ENCODE measurements at regions of chr4 and their contacts with region 1.

Region 1: DNA sequence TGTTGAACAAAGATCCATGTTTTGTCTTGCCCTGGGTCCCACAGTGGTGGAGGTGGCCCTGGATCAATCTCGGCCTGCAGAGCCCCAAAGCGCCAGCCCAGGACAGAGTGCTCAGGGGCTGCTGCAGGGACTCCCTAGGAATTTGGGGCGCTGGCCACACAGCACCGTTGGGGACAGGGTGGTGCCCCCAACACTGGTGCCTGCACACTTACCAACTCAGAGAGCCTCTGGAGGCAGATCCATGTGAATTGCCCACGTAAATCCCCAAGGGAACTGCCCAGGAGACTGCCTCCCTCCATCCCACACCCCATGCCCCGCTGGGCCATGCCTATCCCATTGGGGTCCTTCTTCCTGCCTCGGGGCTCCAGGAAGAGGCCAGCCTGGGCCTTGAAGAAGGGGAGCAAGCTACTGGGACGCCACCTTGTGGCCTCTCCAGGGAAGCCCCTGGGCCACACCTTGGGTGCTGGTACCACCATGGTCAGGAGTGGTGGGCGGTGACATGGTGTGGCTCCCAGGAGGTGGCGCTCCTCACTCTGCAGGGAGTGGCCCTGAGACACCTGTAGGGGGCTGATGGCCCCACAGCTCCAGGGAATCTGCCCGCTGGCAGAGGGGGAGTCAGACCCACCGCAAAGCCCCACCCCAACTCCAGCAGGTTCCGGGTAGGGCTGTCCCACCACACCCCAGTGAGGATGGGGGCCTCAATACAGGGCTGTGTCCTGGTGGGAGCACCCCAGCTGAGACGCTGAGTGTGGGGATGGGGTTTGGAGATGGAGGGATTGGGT is 22.8 kb downstream of the CFAP99 start:
- DNase-seq: peak; percentile 76
- H3K4me3 Mint-ChIP-seq: no peak overlapping the region
- H3K27ac Mint-ChIP-seq: no peak overlapping the region
- H3K4me1 Mint-ChIP-seq: peaks cover 3% of the 10 kb centered on the region
- H3K27me3 Mint-ChIP-seq: no peaks in the 10 kb centered on the region

Region 2: GRCh38 chr4:2220016-2220630 is 221.5 kb before region 1 on chr4:
- CTCF ChIA-PET with region 1: interaction called, 22 read pairs
- POLR2A ChIA-PET with region 1: no interaction called
- DNase-seq: peak; percentile 87
- H3K4me3 Mint-ChIP-seq: no peak overlapping the region
- H3K27ac Mint-ChIP-seq: peak overlapping the region; percentile 10
- H3K4me1 Mint-ChIP-seq: peaks cover 10% of the 10 kb centered on the region
- H3K27me3 Mint-ChIP-seq: no peaks in the 10 kb centered on the region

Region 3: DNA sequence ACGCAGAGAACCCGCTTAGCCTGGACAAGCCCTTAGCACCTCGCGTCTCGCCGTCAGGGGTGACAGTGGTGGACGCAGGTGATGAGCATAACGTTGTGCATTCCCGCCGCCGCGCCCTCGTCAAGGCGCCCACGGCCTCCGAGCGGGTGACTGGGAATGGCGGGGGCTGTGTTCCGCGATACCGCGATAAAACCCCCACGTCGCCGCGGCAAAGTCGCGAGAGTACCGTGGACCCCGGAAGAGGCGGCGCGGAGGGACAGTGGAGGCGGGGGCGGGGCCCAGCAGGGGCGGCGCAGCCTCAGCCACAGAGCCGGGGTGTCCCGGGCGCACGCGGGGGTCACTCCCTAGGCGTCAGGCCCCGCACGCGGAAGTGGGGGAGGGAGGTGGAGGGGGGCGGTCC is 76.9 kb before region 1 on chr4:
- CTCF ChIA-PET with region 1: no interaction called
- POLR2A ChIA-PET with region 1: no interaction called
- DNase-seq: peak; percentile 67
- H3K4me3 Mint-ChIP-seq: peak overlapping the region; percentile 66
- H3K27ac Mint-ChIP-seq: peak overlapping the region; percentile 79
- H3K4me1 Mint-ChIP-seq: peaks cover 6% of the 10 kb centered on the region
- H3K27me3 Mint-ChIP-seq: no peaks in the 10 kb centered on the region

Region 4: DNA sequence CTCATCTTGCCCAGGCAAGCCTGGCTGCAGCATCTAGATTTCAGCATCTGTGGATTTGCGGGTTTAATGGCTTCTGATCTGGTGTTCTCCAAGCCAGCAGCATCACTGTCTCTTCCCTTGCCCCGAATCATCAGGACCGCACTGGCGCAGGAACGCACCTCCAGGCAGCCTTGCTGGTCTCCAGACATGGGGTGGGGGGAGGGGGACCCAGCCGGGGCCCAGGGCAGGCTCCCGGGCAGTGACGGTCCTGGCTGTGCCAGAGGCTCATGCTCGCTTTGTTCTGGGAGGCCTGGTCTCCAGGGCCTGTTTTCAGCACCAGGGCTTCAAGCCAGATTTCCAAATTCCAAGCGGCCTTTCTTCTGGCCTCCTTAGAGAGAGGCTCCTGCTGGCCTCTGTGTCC is 17.9 kb before region 1 on chr4:
- CTCF ChIA-PET with region 1: interaction called, 10 read pairs
- POLR2A ChIA-PET with region 1: no interaction called
- DNase-seq: no peak
- H3K4me3 Mint-ChIP-seq: no peak overlapping the region
- H3K27ac Mint-ChIP-seq: no peak overlapping the region
- H3K4me1 Mint-ChIP-seq: peaks cover 12% of the 10 kb centered on the region
- H3K27me3 Mint-ChIP-seq: peaks cover 31% of the 10 kb centered on the region

Region 5: DNA sequence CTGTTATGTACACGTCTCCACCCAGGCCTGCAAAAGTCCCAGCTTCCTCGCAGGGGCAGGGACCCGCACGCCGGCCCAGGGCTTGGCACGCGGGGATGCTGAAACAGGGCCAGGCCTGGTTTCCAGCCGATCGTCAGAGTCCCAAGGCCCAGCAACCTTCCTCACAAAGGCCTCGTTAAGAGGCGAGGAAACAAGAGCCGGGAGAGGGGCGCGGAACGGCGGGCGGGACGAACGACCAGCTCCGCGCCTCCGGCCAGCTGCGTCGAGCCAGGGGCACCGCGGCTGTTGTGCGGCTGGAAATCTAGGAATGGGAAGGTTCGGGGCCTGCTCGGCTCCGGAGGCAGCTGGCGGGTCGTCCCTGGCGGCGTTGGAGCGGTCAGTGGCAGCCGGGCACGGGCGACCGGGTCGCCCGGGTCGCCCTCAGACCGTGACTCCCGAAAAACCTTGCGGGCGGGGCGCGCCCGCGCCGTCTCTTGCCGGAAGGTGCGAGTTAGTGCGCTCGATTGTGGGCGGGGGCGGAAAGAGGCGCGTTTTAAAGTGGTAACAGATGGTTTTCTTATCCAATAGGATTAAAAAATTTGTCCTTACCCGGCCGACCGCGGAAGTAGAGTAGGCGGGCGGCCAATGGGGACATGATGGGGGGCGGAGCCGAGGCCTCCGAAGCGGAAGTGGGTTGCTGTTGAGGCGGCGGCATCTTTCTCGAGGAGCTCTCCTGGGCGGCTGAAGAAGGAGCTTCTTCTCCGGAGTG is 27.0 kb after region 1 on chr4 and contains the start of gene RNF4:
- CTCF ChIA-PET with region 1: interaction called, 12 read pairs
- POLR2A ChIA-PET with region 1: no interaction called
- DNase-seq: peak; percentile 97
- H3K4me3 Mint-ChIP-seq: peak within 1 kb of the TSS; percentile 98
- H3K27ac Mint-ChIP-seq: peak within 1 kb of the TSS; percentile 99
- H3K4me1 Mint-ChIP-seq: peaks cover 47% of the 10 kb centered on the region
- H3K27me3 Mint-ChIP-seq: no peaks in the 10 kb centered on the region
- total RNA-seq, gene RNF4: 96.2 to 102 TPM